Spleen (tissue), 13 donors: ENCODE measurements at regions of chr2 and their contacts with region 1.

Region 1: DNA sequence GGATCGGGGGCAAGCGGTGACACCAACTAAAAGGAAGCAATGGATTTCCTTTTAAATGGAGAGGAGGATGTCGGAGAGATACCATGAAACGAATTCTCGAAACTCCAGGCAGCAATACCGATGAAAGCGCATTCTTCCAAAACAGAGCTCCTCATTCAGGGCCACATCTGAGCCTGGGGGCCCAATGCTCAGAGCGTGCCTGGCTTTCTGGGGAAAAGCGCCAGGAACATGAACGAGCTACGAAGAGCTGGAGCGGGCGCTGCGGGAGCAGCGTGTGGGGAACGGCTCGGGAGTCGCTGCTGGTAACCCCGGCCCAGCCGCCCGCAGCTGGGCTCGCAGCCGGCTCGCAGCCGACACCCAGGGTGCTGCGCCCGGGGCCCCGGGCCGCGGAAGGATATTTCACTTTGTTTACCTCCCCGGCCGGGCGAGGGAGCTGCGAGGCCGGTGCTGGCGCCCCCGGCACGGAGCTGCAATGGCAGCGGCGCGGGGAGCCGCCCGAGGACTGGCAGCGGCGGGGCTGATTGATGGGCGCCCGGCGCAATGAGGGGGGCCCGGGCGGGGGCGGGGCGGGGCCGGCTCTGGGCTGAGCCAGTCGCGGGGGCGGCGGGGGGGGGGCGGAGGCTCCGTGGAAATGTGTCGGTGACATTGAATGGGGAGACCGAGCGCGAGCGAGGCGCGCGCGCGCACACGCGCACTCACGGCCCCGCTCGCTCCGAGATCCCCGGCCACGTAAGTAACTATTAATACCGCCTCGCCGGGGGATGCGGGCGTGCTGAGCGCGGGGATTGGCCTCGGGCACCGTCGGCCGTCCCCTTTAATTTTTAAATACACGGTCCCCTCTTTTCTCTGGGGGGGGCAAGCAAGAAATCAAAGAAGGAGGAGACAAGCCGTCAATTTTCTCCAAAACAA is at the start of gene TRIB2:
- DNase-seq: peak; percentile 97
- H3K4me3 ChIP-seq: peak within 1 kb of the TSS; percentile 52 to 92 (median 78)
- H3K27ac ChIP-seq: peak within 1 kb of the TSS; percentile 84 to 97 (median 96)
- H3K4me1 ChIP-seq: peaks cover 10 to 60% (median 28%) of the 10 kb centered on the region in 6 donors
- H3K27me3 ChIP-seq: peaks cover 0 to 36% (median 6%) of the 10 kb centered on the region in 7 donors
- CTCF ChIP-seq: peak in 7 of 11 experiments; percentile 3 to 58 (median 38)
- POLR2A ChIP-seq: peak in 1 of 3 donors; percentile 48
- total RNA-seq, gene TRIB2: 69.3 to 216 (median 148) TPM

Region 2: GRCh38 chr2:11829947-11830707 is 886.4 kb before region 1 on chr2:
- intact Hi-C with region 1: loop called (anchors 5 kb)
- DNase-seq: peak; percentile 86
- H3K4me3 ChIP-seq: peak overlapping the region; percentile 0 to 55 (median 16)
- H3K27ac ChIP-seq: peak overlapping the region; percentile 59 to 84 (median 78)
- H3K4me1 ChIP-seq: peaks cover 29 to 73% (median 46%) of the 10 kb centered on the region in 6 donors
- H3K27me3 ChIP-seq: no peaks in the 10 kb centered on the region
- CTCF ChIP-seq: no peak
- POLR2A ChIP-seq: no peak

Region 3: GRCh38 chr2:12236136-12236844 is 480.2 kb before region 1 on chr2:
- intact Hi-C with region 1: no loop called
- DNase-seq: no peak
- H3K4me3 ChIP-seq: no peak overlapping the region
- H3K27ac ChIP-seq: no peak overlapping the region
- H3K4me1 ChIP-seq: no peaks in the 10 kb centered on the region
- H3K27me3 ChIP-seq: no peaks in the 10 kb centered on the region
- CTCF ChIP-seq: no peak
- POLR2A ChIP-seq: no peak

Region 4: DNA sequence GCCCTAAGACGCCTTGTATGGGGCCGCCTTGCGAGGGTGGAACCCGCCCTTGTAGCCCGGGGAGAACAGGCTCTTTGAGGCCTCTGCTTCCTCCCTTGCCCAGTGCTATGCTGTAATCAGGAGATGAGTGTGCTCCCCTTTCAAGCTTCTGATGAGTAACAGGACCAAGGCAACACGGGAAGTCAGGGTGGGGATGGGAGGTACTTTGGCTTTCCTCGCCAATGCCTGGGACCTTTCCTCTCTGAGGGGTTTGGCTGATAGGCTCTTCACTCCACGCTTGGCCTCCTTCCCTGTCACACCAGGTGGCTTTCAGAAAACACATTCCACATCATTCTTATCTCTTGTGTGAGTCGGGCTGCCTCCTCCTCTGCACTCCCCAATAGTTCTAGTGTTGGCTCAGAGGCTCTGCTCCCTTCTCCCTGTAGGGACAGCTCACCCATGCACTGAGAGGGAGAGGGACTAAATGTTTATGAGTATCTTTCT is 223.5 kb before region 1 on chr2:
- intact Hi-C with region 1: no loop called
- DNase-seq: no peak
- H3K4me3 ChIP-seq: no peak overlapping the region
- H3K27ac ChIP-seq: peak overlapping the region in 1 of 8 donors; percentile 42
- H3K4me1 ChIP-seq: peaks cover 7 to 22% (median 11%) of the 10 kb centered on the region in 6 donors
- H3K27me3 ChIP-seq: no peaks in the 10 kb centered on the region
- CTCF ChIP-seq: no peak
- POLR2A ChIP-seq: no peak

Region 5: DNA sequence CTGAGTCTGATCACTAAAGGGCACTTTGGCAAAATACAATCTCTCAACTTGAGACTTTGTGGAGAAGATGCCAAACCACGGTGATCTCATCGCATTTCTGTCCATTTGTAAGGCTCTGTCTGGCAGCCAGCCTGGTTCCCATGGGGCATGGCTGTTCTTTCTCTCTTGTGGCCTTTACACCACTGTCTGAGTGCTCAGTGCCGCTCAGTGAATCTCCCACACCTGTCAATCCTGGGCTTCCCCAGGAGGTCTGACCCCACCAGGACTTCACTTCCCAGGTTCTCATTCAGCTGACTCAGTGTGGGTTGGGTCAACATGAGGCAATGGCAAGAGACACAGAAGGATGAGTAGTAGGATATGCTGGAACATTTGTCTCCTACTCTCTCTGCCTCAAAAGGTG is 96.6 kb before region 1 on chr2:
- intact Hi-C with region 1: no loop called
- DNase-seq: no peak
- H3K4me3 ChIP-seq: no peak overlapping the region
- H3K27ac ChIP-seq: no peak overlapping the region
- H3K4me1 ChIP-seq: peaks cover 0 to 16% (median 11%) of the 10 kb centered on the region in 6 donors
- H3K27me3 ChIP-seq: no peaks in the 10 kb centered on the region
- CTCF ChIP-seq: no peak
- POLR2A ChIP-seq: no peak

Region 6: DNA sequence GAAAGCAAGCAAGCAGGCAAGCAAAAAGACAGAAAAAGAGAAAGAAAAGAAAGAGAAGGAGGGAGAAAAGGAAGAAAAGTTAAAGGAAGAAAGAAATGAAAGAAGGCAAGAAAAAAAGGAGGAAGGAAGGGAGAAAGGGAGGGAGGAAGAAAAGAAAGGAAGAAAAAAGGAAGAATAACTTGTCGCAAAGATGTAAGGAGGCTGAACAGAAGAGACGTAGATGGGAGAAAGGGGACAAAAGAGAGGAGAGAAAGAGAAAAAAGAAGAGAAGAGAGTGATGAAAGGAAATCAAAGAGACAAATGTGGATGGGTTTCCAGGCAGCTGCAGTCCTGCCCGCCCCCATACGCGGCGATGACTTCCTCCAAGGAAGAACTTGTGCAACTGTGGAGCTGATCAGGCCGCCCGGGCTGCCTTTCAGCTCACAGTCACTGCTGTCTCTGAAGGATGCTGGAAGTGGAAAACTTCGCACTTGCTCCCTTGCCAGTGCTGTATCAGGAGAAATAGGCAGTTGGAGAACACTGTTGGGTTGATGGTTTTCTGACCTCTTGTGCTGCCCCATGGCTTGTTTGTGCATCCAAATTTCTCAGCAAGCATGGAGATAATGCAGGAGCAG is 53.1 kb after region 1 on chr2:
- intact Hi-C with region 1: no loop called
- DNase-seq: no peak
- H3K4me3 ChIP-seq: no peak overlapping the region
- H3K27ac ChIP-seq: no peak overlapping the region
- H3K4me1 ChIP-seq: peaks cover 0 to 5% (median 0%) of the 10 kb centered on the region in 6 donors
- H3K27me3 ChIP-seq: peaks cover 0 to 6% (median 0%) of the 10 kb centered on the region in 7 donors
- CTCF ChIP-seq: no peak
- POLR2A ChIP-seq: no peak

Region 7: DNA sequence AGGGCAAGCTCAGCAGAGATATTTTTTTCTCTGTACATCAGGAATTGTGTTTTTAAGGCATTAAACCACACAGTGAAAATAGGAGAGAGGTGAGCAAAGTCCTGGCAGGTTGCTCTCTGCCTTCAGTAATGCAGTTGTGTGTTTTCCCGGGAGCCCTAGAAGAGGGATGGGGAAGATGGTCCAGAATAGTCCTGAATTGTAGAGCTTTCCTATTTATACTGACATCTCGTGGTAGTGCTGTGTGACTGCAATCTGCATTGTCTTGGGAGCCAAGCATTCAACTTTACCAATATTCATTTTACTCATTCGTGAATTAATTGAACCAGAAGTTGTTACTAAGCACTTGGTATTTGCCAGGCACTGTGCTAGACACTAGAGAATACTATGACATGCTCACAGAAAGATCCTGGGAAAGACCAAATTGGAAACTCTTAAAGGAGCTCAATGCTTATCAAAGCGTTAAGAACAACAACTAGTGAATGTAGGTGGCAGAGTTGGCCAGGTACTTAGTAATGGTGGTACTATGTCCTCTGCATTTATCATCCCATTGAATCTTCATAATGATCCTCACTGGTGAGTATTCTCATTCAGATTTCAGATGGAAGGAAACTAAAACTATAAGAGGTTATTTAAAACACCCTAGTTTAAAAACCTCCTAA is 214.8 kb after region 1 on chr2:
- intact Hi-C with region 1: loop called (anchors 5 kb)
- DNase-seq: no peak
- H3K4me3 ChIP-seq: no peak overlapping the region
- H3K27ac ChIP-seq: peak overlapping the region in 4 of 8 donors; percentile 22 to 55 (median 36)
- H3K4me1 ChIP-seq: peaks cover 0 to 31% (median 8%) of the 10 kb centered on the region in 6 donors
- H3K27me3 ChIP-seq: no peaks in the 10 kb centered on the region
- CTCF ChIP-seq: peak; percentile 60 to 89 (median 84)
- POLR2A ChIP-seq: no peak

Region 8: DNA sequence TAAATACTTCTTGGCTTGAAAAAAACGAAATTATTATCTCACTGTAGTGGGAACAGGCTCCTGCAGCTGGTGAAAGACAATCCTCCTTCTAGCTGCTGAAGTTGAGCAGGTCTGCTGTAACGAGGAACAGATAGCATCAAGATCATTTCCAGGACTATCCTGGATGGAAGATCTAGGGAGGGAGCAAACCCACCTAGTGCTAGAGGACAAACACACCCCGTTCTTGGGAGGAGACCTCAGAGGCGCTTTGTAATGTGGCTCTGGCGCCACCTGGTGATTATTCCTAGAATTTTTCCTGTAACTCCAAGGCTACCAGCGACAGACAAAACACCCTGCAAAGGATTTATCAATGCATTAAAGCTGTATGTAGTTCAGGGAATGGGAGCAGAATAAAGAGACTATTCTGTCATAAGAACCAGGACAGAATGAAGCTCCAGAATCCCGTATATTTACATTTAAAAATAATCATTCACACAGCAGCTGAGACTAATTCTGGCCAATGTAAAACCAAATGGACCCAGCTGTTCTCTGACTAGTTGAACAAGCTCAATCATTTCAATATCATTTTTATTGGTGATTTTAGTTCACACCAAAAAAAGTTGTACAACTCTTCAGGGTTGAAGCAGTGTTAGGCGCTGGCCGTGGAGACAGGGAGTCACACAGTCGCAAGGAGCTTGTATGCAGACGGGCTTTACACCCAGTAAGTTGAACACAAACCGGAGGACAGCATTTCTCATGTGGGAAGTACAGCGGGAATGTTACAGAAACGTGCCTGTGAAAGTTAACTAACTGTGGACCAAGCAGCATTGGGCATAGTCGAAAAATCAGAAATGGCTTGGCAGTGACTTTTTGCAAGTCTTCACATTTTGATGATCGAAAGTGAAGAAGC is 290.5 kb after region 1 on chr2:
- intact Hi-C with region 1: loop called (anchors 5 kb)
- DNase-seq: no peak
- H3K4me3 ChIP-seq: peak overlapping the region in 2 of 8 donors; percentile 9 to 48
- H3K27ac ChIP-seq: peak overlapping the region in 7 of 8 donors; percentile 25 to 72 (median 56)
- H3K4me1 ChIP-seq: peaks cover 0 to 26% (median 9%) of the 10 kb centered on the region in 6 donors
- H3K27me3 ChIP-seq: peaks cover 0 to 7% (median 0%) of the 10 kb centered on the region in 7 donors
- CTCF ChIP-seq: peak; percentile 63 to 89 (median 81)
- POLR2A ChIP-seq: no peak